K562 (cell line): ENCODE measurements at regions of chr7 and their contacts with region 1.

Region 1: GRCh38 chr7:134212576-134213546 is 85.7 kb downstream of the LRGUK start:
- DNase-seq: peak in 2 of 4 experiments; percentile 58 to 81
- ATAC-seq: peak; percentile 46
- H3K4me3 ChIP-seq: no peak overlapping the region
- H3K27ac ChIP-seq: peak overlapping the region; percentile 33; the same call in 2 of the 3 replicates
- H3K4me1 ChIP-seq: peaks cover 25 to 48% of the 10 kb centered on the region in 2 experiments
- H3K27me3 ChIP-seq: no peaks in the 10 kb centered on the region
- CTCF ChIP-seq: no peak
- EP300 ChIP-seq: peak; percentile 33
- POLR2A ChIP-seq: no peak
- RAD21 ChIP-seq: no peak

Region 2: GRCh38 chr7:134174797-134175261 is 38.0 kb before region 1 on chr7:
- CTCF ChIA-PET with region 1: no interaction called
- POLR2A ChIA-PET with region 1: no interaction called
- in situ Hi-C with region 1: no loop called
- intact Hi-C with region 1: no loop called
- DNase-seq: peak; percentile 54 to 86 (median 70)
- ATAC-seq: peak; percentile 91
- H3K4me3 ChIP-seq: no peak overlapping the region
- H3K27ac ChIP-seq: no peak overlapping the region
- H3K4me1 ChIP-seq: peaks cover 0 to 14% of the 10 kb centered on the region in 2 experiments; a peak in 3 of 5 replicates
- H3K27me3 ChIP-seq: no peaks in the 10 kb centered on the region
- CTCF ChIP-seq: no peak
- EP300 ChIP-seq: 0 out of 2 replicates have a peak, but pooled peaks have one; percentile 4
- POLR2A ChIP-seq: no peak
- RAD21 ChIP-seq: 0 out of 4 replicates have a peak, but pooled peaks of 1 of the 2 experiments have one; percentile 8

Region 3: GRCh38 chr7:134200970-134201369 is 11.9 kb before region 1 on chr7:
- CTCF ChIA-PET with region 1: no interaction called
- POLR2A ChIA-PET with region 1: interaction called, 16 read pairs
- in situ Hi-C with region 1: no loop called
- intact Hi-C with region 1: no loop called
- DNase-seq: peak in 2 of 4 experiments; percentile 10 to 42
- ATAC-seq: no peak; the same call in 2 of the 3 replicates
- H3K4me3 ChIP-seq: no peak overlapping the region
- H3K27ac ChIP-seq: peak overlapping the region; percentile 7; the same call in 2 of the 3 replicates
- H3K4me1 ChIP-seq: peaks cover 2 to 26% of the 10 kb centered on the region in 2 experiments; a peak in 3 of 5 replicates
- H3K27me3 ChIP-seq: no peaks in the 10 kb centered on the region
- CTCF ChIP-seq: no peak
- EP300 ChIP-seq: no peak
- POLR2A ChIP-seq: no peak
- RAD21 ChIP-seq: no peak

Region 4: GRCh38 chr7:134262322-134262721 is 49.5 kb after region 1 on chr7:
- CTCF ChIA-PET with region 1: no interaction called
- POLR2A ChIA-PET with region 1: no interaction called
- in situ Hi-C with region 1: no loop called
- intact Hi-C with region 1: no loop called
- DNase-seq: no peak
- ATAC-seq: no peak
- H3K4me3 ChIP-seq: no peak overlapping the region
- H3K27ac ChIP-seq: no peak overlapping the region
- H3K4me1 ChIP-seq: no peaks in the 10 kb centered on the region
- H3K27me3 ChIP-seq: peaks cover 18% of the 10 kb centered on the region in 2 experiments; a peak in 4 of 5 replicates
- CTCF ChIP-seq: no peak
- EP300 ChIP-seq: no peak
- POLR2A ChIP-seq: no peak
- RAD21 ChIP-seq: no peak

Region 5: GRCh38 chr7:134355927-134356326 is 143.1 kb after region 1 on chr7:
- CTCF ChIA-PET with region 1: no interaction called
- POLR2A ChIA-PET with region 1: no interaction called
- in situ Hi-C with region 1: no loop called
- intact Hi-C with region 1: no loop called
- DNase-seq: no peak
- ATAC-seq: no peak
- H3K4me3 ChIP-seq: no peak overlapping the region
- H3K27ac ChIP-seq: no peak overlapping the region
- H3K4me1 ChIP-seq: peaks cover 5 to 15% of the 10 kb centered on the region in 2 experiments; a peak in 3 of 5 replicates
- H3K27me3 ChIP-seq: peaks cover 20 to 22% of the 10 kb centered on the region in 2 experiments
- CTCF ChIP-seq: no peak
- EP300 ChIP-seq: no peak
- POLR2A ChIP-seq: no peak
- RAD21 ChIP-seq: no peak